B cell (primary cell): ENCODE measurements at regions of chr1 and their contacts with region 1.

Region 1: GRCh38 chr1:247390116-247390791 is 25.7 kb upstream of the NLRP3 start:
- DNase-seq: peak; percentile 93
- ATAC-seq: peak; percentile 99
- H3K4me3 ChIP-seq: peak overlapping the region in 4 of 5 experiments; percentile 7 to 33 (median 12)
- H3K4me3 Mint-ChIP-seq: peak overlapping the region; percentile 76
- H3K27ac ChIP-seq: peak overlapping the region; percentile 38 to 60
- H3K27ac Mint-ChIP-seq: peak overlapping the region; percentile 85
- H3K4me1 ChIP-seq: peaks cover 15 to 18% of the 10 kb centered on the region in 2 donors
- H3K4me1 Mint-ChIP-seq: peaks cover 16% of the 10 kb centered on the region
- H3K27me3 ChIP-seq: no peaks in the 10 kb centered on the region
- H3K27me3 Mint-ChIP-seq: no peaks in the 10 kb centered on the region
- CTCF ChIP-seq: peak; percentile 92

Region 2: DNA sequence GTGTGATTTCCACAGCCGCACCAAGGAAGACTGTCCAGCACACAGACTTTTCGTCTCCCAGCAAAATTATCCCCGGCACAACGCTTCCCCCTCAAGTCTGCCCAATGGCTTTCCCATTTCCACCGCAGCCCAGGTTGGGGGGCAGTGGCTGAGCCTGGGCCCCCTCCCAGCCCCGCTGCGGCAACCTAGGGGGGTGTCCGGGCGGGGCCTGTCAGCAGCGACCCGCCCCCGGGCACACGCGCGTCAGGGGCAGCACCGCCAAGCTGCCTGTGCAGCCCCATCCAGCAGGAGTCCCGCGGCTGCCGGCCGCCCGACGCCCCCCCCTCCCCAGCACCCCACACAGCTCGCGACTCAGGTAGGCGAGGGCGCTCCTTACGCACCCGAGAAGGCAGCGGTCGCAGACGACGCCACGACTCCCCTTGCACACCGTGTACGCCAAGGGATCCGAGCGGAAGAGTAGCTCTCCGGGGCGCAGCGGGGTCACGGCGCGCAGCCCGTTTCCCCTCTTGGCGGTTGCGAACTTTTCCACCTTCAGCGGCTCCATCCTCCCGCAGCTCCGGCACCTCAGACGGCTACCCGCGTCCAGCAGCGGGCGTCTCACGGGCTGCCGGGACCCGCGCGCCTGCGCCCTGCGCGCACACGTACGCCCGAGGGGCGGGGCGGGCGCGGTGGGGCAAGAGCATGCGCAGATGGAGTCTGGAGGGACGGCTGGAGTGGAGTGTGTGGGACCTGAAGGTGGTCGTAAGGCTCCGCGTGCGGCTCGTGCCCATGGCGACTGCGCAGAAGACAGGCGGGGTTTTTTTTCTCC is 883.4 kb before region 1 on chr1 and contains the start of gene SMYD3:
- CTCF ChIA-PET with region 1: no interaction called
- POLR2A ChIA-PET with region 1: no interaction called
- intact Hi-C with region 1: loop called (anchors 10 kb)
- DNase-seq: peak; percentile 90
- ATAC-seq: peak; percentile 92
- H3K4me3 ChIP-seq: peak within 1 kb of the TSS; percentile 79 to 92 (median 82)
- H3K4me3 Mint-ChIP-seq: peak within 1 kb of the TSS; percentile 97
- H3K27ac ChIP-seq: peak within 1 kb of the TSS; percentile 15 to 58
- H3K27ac Mint-ChIP-seq: peak within 1 kb of the TSS; percentile 96
- H3K4me1 ChIP-seq: peaks cover 10 to 14% of the 10 kb centered on the region in 2 donors
- H3K4me1 Mint-ChIP-seq: peaks cover 20% of the 10 kb centered on the region
- H3K27me3 ChIP-seq: no peaks in the 10 kb centered on the region
- H3K27me3 Mint-ChIP-seq: no peaks in the 10 kb centered on the region
- CTCF ChIP-seq: no peak
- total RNA-seq, gene SMYD3: 37.2 and 37.3 TPM in 2 replicates

Region 3: GRCh38 chr1:246931549-246932365 is 458.5 kb before region 1 on chr1 and contains the start of gene AHCTF1:
- CTCF ChIA-PET with region 1: no interaction called
- POLR2A ChIA-PET with region 1: interaction called, 3 read pairs
- intact Hi-C with region 1: loop called (anchors 1 kb)
- DNase-seq: peak; percentile 97
- ATAC-seq: peak; percentile 86
- H3K4me3 ChIP-seq: peak within 1 kb of the TSS; percentile 85 to 96 (median 88)
- H3K4me3 Mint-ChIP-seq: peak within 1 kb of the TSS; percentile 98
- H3K27ac ChIP-seq: peak within 1 kb of the TSS; percentile 87 to 93
- H3K27ac Mint-ChIP-seq: peak within 1 kb of the TSS; percentile 98
- H3K4me1 ChIP-seq: peaks cover 12 to 18% of the 10 kb centered on the region in 2 donors
- H3K4me1 Mint-ChIP-seq: peaks cover 33% of the 10 kb centered on the region
- H3K27me3 ChIP-seq: no peaks in the 10 kb centered on the region
- H3K27me3 Mint-ChIP-seq: no peaks in the 10 kb centered on the region
- CTCF ChIP-seq: no peak
- total RNA-seq, gene AHCTF1: 34.8 and 43.1 TPM in 2 replicates

Region 4: GRCh38 chr1:247373721-247374141 is 16.5 kb before region 1 on chr1:
- CTCF ChIA-PET with region 1: interaction called, 72 read pairs
- POLR2A ChIA-PET with region 1: no interaction called
- intact Hi-C with region 1: loop called (anchors 1 kb)
- DNase-seq: peak; percentile 66
- ATAC-seq: peak; percentile 71
- H3K4me3 ChIP-seq: peak overlapping the region in 2 of 5 experiments; percentile 32 to 49
- H3K4me3 Mint-ChIP-seq: peak overlapping the region; percentile 41
- H3K27ac ChIP-seq: no peak overlapping the region
- H3K27ac Mint-ChIP-seq: no peak overlapping the region
- H3K4me1 ChIP-seq: peaks cover 0 to 2% of the 10 kb centered on the region in 2 donors
- H3K4me1 Mint-ChIP-seq: peaks cover 7% of the 10 kb centered on the region
- H3K27me3 ChIP-seq: peaks cover 0 to 9% (median 0%) of the 10 kb centered on the region in 4 experiments
- H3K27me3 Mint-ChIP-seq: peaks cover 20% of the 10 kb centered on the region
- CTCF ChIP-seq: peak; percentile 50

Region 5: GRCh38 chr1:247471445-247472016 is 81.3 kb after region 1 on chr1:
- CTCF ChIA-PET with region 1: interaction called, 56 read pairs
- POLR2A ChIA-PET with region 1: no interaction called
- intact Hi-C with region 1: loop called (anchors 1 kb)
- DNase-seq: no peak
- ATAC-seq: peak; percentile 84
- H3K4me3 ChIP-seq: no peak overlapping the region
- H3K4me3 Mint-ChIP-seq: peak overlapping the region; percentile 34
- H3K27ac ChIP-seq: no peak overlapping the region
- H3K27ac Mint-ChIP-seq: no peak overlapping the region
- H3K4me1 ChIP-seq: peaks cover 8 to 11% of the 10 kb centered on the region in 2 donors
- H3K4me1 Mint-ChIP-seq: peaks cover 31% of the 10 kb centered on the region
- H3K27me3 ChIP-seq: no peaks in the 10 kb centered on the region
- H3K27me3 Mint-ChIP-seq: no peaks in the 10 kb centered on the region
- CTCF ChIP-seq: no peak

Region 6: GRCh38 chr1:247576495-247576894 is 186.2 kb after region 1 on chr1:
- CTCF ChIA-PET with region 1: interaction called, 11 read pairs
- POLR2A ChIA-PET with region 1: no interaction called
- intact Hi-C with region 1: loop called (anchors 2 kb)
- DNase-seq: peak; percentile 18
- ATAC-seq: no peak
- H3K4me3 ChIP-seq: no peak overlapping the region
- H3K4me3 Mint-ChIP-seq: no peak overlapping the region
- H3K27ac ChIP-seq: no peak overlapping the region
- H3K27ac Mint-ChIP-seq: no peak overlapping the region
- H3K4me1 ChIP-seq: no peaks in the 10 kb centered on the region
- H3K4me1 Mint-ChIP-seq: no peaks in the 10 kb centered on the region
- H3K27me3 ChIP-seq: peaks cover 0 to 7% (median 0%) of the 10 kb centered on the region in 4 experiments
- H3K27me3 Mint-ChIP-seq: peaks cover 32% of the 10 kb centered on the region
- CTCF ChIP-seq: peak; percentile 37